Aorta (tissue), 5 donors: ENCODE measurements at regions of chr2 and their contacts with region 1.

Region 1: GRCh38 chr2:118861731-118862130 is 14.3 kb upstream of the EN1 start:
- DNase-seq: no peak
- ATAC-seq: no peak
- H3K4me3 ChIP-seq: no peak overlapping the region
- H3K27ac ChIP-seq: no peak overlapping the region
- H3K4me1 ChIP-seq: no peaks in the 10 kb centered on the region
- H3K27me3 ChIP-seq: no peaks in the 10 kb centered on the region

Region 2: DNA sequence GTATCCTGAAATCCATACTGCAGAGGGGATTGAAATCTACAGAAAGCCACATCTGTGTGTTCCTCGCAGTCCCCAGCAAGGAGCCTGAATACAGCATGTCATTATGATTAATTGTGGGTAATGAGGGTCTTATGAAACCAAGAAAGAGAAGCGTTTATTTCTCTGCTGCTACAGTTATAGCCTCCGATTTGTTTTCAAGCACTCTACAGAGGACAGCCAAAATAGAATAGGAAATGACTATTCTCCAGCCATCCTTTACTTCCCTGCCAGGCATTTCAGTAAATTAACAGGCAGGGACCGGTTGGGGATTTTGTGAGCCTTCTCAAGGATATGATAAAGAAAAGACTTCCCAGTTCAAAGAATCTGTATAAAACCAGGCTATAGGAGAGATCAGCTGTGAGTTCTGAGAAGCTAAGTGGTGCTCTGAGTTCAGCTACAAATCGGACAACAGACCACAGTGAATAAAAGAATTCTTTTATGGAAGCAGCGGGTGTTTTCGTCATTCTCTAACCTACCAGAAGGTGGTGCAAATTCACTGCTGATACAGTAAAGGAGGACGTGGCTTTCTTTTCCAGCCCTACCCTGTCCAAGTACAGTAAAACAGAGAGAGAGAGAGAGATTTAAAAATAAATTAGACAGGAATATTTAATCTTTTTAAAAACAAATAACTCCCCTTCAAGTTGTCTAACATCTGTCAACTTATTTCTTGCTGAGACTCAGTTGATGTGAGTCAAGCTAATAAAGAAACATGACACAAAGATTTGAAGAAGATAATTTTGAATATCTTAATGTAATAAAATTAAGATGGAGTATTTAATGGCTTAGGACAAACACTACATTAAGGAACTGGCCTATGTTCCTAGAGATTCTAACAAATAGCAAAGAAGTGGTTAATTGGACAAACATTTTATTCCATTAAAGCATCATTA is 639.8 kb before region 1 on chr2:
- intact Hi-C with region 1: loop called in 1 of 2 experiments (anchors 2 kb)
- DNase-seq: no peak
- ATAC-seq: no peak
- H3K4me3 ChIP-seq: no peak overlapping the region
- H3K27ac ChIP-seq: no peak overlapping the region
- H3K4me1 ChIP-seq: no peaks in the 10 kb centered on the region
- H3K27me3 ChIP-seq: peaks cover 0 to 2% of the 10 kb centered on the region in 2 donors